PC-3 (cell line): ENCODE measurements at regions of chr6 and their contacts with region 1.

Region 1: GRCh38 chr6:51025082-51025777 is 206.6 kb downstream of the TFAP2B start:
- DNase-seq: peak; percentile 97
- ATAC-seq: peak; percentile 64
- H3K4me3 ChIP-seq: no peak overlapping the region
- H3K27ac ChIP-seq: peak overlapping the region; percentile 85
- H3K4me1 ChIP-seq: peaks cover 59% of the 10 kb centered on the region
- H3K27me3 ChIP-seq: no peaks in the 10 kb centered on the region
- CTCF ChIP-seq: no peak

Region 2: GRCh38 chr6:51090343-51090742 is 65.1 kb after region 1 on chr6:
- CTCF ChIA-PET with region 1: no interaction called
- POLR2A ChIA-PET with region 1: no interaction called
- intact Hi-C with region 1: loop called (anchors 1 kb)
- DNase-seq: no peak
- ATAC-seq: no peak
- H3K4me3 ChIP-seq: no peak overlapping the region
- H3K27ac ChIP-seq: no peak overlapping the region
- H3K4me1 ChIP-seq: peaks cover 11% of the 10 kb centered on the region; the same call in 1 of the 2 replicates
- H3K27me3 ChIP-seq: no peaks in the 10 kb centered on the region
- CTCF ChIP-seq: no peak

Region 3: GRCh38 chr6:51118792-51119482 is 93.7 kb after region 1 on chr6:
- CTCF ChIA-PET with region 1: no interaction called
- POLR2A ChIA-PET with region 1: no interaction called
- intact Hi-C with region 1: loop called (anchors 2 kb)
- DNase-seq: peak; percentile 69
- ATAC-seq: peak; percentile 68
- H3K4me3 ChIP-seq: no peak overlapping the region
- H3K27ac ChIP-seq: peak overlapping the region; percentile 46
- H3K4me1 ChIP-seq: peaks cover 24% of the 10 kb centered on the region
- H3K27me3 ChIP-seq: no peaks in the 10 kb centered on the region
- CTCF ChIP-seq: no peak

Region 4: DNA sequence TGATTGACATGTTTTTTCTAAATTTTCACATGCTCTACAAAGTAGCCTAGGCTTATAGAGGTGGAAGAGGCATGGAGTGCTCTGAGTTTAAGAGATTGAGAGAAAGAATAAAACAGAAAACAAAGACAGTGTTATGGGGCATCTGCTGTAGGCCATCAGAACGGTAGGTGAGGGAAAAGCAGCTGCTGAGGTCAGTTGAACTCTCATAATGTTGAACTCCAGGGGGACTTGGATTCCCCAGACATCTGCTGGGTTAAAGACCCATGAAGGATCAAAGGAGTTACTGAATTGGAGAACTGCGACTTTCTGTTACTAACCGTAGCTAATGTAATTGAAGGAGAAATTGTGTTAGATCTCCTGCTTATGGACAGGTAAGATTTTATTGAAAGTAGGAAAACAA is 127.4 kb after region 1 on chr6:
- CTCF ChIA-PET with region 1: no interaction called
- POLR2A ChIA-PET with region 1: no interaction called
- intact Hi-C with region 1: loop called (anchors 5 kb)
- DNase-seq: no peak
- ATAC-seq: no peak
- H3K4me3 ChIP-seq: no peak overlapping the region
- H3K27ac ChIP-seq: no peak overlapping the region
- H3K4me1 ChIP-seq: peaks cover 15% of the 10 kb centered on the region
- H3K27me3 ChIP-seq: no peaks in the 10 kb centered on the region
- CTCF ChIP-seq: no peak